Activated CD4-positive, alpha-beta T cell treated with anti-CD3 and anti-CD28 coated beads for 36 hours (primary cell): ENCODE measurements at regions of chr22 and their contacts with region 1.

Region 1: GRCh38 chr22:50582562-50583293 is at the start of gene CHKB:
- DNase-seq: peak; percentile 99
- ATAC-seq: peak; percentile 97
- H3K4me3 Mint-ChIP-seq: peak within 1 kb of the TSS; percentile 86
- H3K27ac Mint-ChIP-seq: peak within 1 kb of the TSS; percentile 84
- H3K4me1 Mint-ChIP-seq: peaks cover 25% of the 10 kb centered on the region
- H3K27me3 Mint-ChIP-seq: no peaks in the 10 kb centered on the region
- total RNA-seq, gene CHKB: 68.2 to 79.7 TPM

Region 2: DNA sequence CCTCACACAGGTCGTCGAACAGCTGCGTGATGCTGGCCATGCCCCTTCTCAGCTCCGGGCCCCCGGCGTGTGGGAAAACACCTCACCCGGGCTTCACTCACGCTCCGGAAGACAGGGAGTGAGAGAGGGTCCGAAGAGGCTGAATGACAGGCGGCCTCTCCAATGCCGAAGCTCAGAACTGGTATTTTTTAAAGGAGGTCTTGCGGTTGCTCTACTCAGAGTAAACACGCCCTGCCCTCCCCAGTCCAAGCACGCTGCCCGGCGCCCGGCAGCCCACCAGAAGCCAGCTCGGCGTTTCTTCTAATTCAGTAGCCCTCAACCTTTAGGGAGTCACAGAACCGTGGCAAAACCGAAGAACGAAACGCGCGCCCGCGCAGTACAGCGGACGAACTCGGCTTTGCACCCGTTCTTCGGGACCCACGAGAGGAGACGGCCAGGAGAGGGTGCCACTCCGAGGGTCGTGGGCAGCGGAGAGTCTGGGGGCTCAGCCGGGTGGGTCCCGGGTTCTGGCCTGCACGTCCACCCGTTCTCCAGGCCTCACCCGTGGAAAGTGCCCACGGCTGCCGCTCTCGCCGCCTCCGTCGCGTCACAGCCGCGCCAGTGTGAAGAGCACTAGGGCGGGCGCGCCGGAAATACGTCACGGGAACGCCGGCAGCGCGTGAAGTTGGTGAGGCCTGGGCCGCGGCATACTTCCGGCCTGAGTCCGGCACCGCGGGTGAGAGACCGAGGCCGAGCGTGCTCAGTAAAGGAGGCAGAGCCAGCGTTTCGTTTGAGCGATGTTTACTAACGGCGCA is 338.1 kb before region 1 on chr22 and contains the start of gene TUBGCP6:
- CTCF ChIA-PET with region 1: no interaction called
- POLR2A ChIA-PET with region 1: no interaction called
- intact Hi-C with region 1: loop called in 1 of 2 experiments (anchors 2 kb)
- DNase-seq: peak; percentile 96
- ATAC-seq: peak; percentile 80
- H3K4me3 Mint-ChIP-seq: peak within 1 kb of the TSS; percentile 94
- H3K27ac Mint-ChIP-seq: peak within 1 kb of the TSS; percentile 100
- H3K4me1 Mint-ChIP-seq: peaks cover 23% of the 10 kb centered on the region
- H3K27me3 Mint-ChIP-seq: no peaks in the 10 kb centered on the region
- total RNA-seq, gene TUBGCP6: 42.2 to 49.2 TPM

Region 3: GRCh38 chr22:50469377-50470305 is 113.1 kb before region 1 on chr22:
- CTCF ChIA-PET with region 1: no interaction called
- POLR2A ChIA-PET with region 1: no interaction called
- intact Hi-C with region 1: loop called in 1 of 2 experiments (anchors 1 kb)
- DNase-seq: peak; percentile 97
- ATAC-seq: peak; percentile 84
- H3K4me3 Mint-ChIP-seq: peak overlapping the region; percentile 59
- H3K27ac Mint-ChIP-seq: peak overlapping the region; percentile 95
- H3K4me1 Mint-ChIP-seq: peaks cover 53% of the 10 kb centered on the region
- H3K27me3 Mint-ChIP-seq: no peaks in the 10 kb centered on the region

Region 4: GRCh38 chr22:50507991-50508884 is 74.5 kb before region 1 on chr22 and contains the start of gene NCAPH2:
- CTCF ChIA-PET with region 1: interaction called, 4 read pairs
- POLR2A ChIA-PET with region 1: interaction called, 4 read pairs
- intact Hi-C with region 1: loop called (anchors 1 kb)
- DNase-seq: peak; percentile 99
- ATAC-seq: peak; percentile 79
- H3K4me3 Mint-ChIP-seq: peak within 1 kb of the TSS; percentile 91
- H3K27ac Mint-ChIP-seq: peak within 1 kb of the TSS; percentile 95
- H3K4me1 Mint-ChIP-seq: peaks cover 23% of the 10 kb centered on the region
- H3K27me3 Mint-ChIP-seq: no peaks in the 10 kb centered on the region
- total RNA-seq, gene NCAPH2: 115 to 123 TPM

Region 5: DNA sequence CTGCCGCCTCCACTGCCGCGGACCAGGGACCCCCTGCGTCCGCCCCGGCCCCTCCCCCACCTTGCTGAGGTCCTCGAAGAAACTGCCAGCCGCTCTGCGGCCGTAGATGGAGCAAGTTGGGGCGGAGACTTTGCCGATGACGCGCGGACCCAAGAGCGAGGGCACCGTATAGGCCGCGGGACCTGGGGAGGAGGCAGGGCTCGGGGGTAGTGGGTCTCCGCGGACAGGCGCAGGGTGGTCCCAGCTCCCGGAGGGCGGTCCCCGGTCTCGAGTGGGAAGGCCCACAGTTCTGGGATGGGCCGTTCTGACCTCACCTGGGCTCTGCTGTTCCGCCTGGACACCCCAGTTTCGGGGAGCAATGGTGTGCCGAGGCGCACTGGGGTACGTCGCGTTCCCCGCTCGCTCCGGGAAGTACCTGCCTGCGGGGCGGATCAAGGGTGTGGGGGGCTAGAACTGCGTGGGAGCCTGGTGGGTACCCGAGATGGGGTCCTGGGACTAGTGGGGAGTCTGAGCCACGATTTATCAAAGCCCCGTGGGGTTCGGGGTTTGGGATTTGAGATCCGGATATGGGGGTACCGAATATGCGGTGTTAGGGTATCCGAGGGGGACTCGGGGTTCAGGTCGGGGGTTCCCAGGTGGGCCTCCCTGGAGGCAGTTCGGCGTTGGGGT is 51.7 kb before region 1 on chr22:
- CTCF ChIA-PET with region 1: interaction called, 14 read pairs
- POLR2A ChIA-PET with region 1: interaction called, 11 read pairs
- intact Hi-C with region 1: loop called (anchors 2 kb)
- DNase-seq: peak; percentile 92
- ATAC-seq: peak; percentile 45
- H3K4me3 Mint-ChIP-seq: peak overlapping the region; percentile 87
- H3K27ac Mint-ChIP-seq: peak overlapping the region; percentile 97
- H3K4me1 Mint-ChIP-seq: peaks cover 45% of the 10 kb centered on the region
- H3K27me3 Mint-ChIP-seq: no peaks in the 10 kb centered on the region

Region 6: GRCh38 chr22:50562523-50563412 is 20.0 kb before region 1 on chr22 and contains the start of gene SYCE3:
- CTCF ChIA-PET with region 1: interaction called, 4 read pairs
- POLR2A ChIA-PET with region 1: interaction called, 4 read pairs
- intact Hi-C with region 1: loop called (anchors 1 to 2 kb)
- DNase-seq: peak; percentile 99
- ATAC-seq: peak; percentile 96
- H3K4me3 Mint-ChIP-seq: peak within 1 kb of the TSS; percentile 83
- H3K27ac Mint-ChIP-seq: peak within 1 kb of the TSS; percentile 84
- H3K4me1 Mint-ChIP-seq: peaks cover 19% of the 10 kb centered on the region
- H3K27me3 Mint-ChIP-seq: no peaks in the 10 kb centered on the region
- total RNA-seq, gene SYCE3: 3.8 TPM

Region 7: GRCh38 chr22:50691521-50691920 is 108.8 kb after region 1 on chr22:
- CTCF ChIA-PET with region 1: no interaction called
- POLR2A ChIA-PET with region 1: no interaction called
- intact Hi-C with region 1: loop called in 1 of 2 experiments (anchors 5 kb)
- DNase-seq: peak; percentile 67
- ATAC-seq: peak; percentile 36
- H3K4me3 Mint-ChIP-seq: no peak overlapping the region
- H3K27ac Mint-ChIP-seq: no peak overlapping the region
- H3K4me1 Mint-ChIP-seq: peaks cover 5% of the 10 kb centered on the region
- H3K27me3 Mint-ChIP-seq: peaks cover 4% of the 10 kb centered on the region